A673 (cell line): ENCODE measurements at regions of chr4 and their contacts with region 1.

Region 1: GRCh38 chr4:47383829-47384427 is 79.6 kb downstream of the COMMD8 start:
- DNase-seq: peak; percentile 64
- H3K4me3 ChIP-seq: no peak overlapping the region
- H3K27ac ChIP-seq: no peak overlapping the region
- H3K4me1 ChIP-seq: no peaks in the 10 kb centered on the region
- H3K27me3 ChIP-seq: no peaks in the 10 kb centered on the region
- CTCF ChIP-seq: peak; percentile 67

Region 2: GRCh38 chr4:46844325-46844917 is 539.5 kb before region 1 on chr4:
- CTCF ChIA-PET with region 1: no interaction called
- POLR2A ChIA-PET with region 1: no interaction called
- intact Hi-C with region 1: loop called (anchors 2 kb)
- DNase-seq: peak; percentile 79
- H3K4me3 ChIP-seq: no peak overlapping the region
- H3K27ac ChIP-seq: no peak overlapping the region
- H3K4me1 ChIP-seq: no peaks in the 10 kb centered on the region
- H3K27me3 ChIP-seq: no peaks in the 10 kb centered on the region
- CTCF ChIP-seq: peak; percentile 81

Region 3: DNA sequence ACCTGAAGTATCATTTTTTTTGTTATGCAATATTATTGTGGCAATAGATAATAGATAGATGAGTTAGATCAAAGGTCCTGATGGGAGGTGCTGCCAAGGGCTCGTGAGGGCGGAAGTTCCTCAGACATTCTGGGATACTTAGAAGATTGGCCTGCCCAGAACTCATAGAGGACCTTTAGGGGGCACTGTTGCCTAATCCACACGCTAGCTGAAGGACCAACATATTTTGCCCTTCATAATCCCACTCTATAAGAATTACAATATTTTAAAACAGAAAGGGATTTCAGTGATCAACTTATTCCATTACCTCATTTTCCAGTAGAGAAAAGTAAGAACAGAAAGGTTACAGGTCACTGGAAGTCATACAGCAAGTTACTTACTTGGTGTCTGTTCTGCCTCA is 451.9 kb before region 1 on chr4:
- CTCF ChIA-PET with region 1: interaction called, 4 read pairs
- POLR2A ChIA-PET with region 1: no interaction called
- intact Hi-C with region 1: loop called (anchors 2 kb)
- DNase-seq: peak; percentile 67
- H3K4me3 ChIP-seq: no peak overlapping the region
- H3K27ac ChIP-seq: no peak overlapping the region
- H3K4me1 ChIP-seq: no peaks in the 10 kb centered on the region
- H3K27me3 ChIP-seq: peaks cover 28% of the 10 kb centered on the region
- CTCF ChIP-seq: peak; percentile 79

Region 4: DNA sequence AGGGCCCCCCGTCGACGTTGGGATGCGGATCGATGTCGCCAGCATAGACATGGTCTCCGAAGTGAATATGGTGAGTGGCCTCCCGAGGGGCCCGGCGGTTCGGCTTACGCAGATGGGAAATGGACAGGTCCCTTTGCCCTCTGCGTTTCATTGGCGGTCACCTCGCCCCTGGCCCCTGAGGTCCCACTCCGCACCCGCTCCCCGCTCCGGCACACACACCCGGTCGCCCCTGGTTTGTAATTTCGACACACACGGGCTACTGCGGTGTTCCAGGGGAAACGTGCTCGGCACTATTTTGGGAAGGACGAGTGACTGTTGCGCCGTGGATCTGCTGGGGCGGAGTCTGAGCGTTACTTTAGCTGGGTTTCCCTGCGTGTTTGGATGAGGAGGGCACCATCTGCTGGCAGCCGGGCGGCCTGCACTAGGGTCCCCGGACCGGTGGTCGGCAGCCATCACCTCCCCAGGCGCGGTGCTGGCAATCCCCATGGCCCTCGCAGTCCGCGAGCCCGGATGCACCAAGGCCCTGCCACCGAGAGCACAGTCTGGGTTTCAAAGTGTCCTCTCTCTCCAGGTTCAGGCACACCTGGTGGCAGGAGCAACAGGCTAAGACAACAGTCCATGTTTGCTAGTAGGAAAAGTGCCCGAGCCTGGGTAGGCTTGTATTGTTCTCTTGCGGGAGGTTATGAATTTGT is 351.4 kb before region 1 on chr4:
- CTCF ChIA-PET with region 1: no interaction called
- POLR2A ChIA-PET with region 1: no interaction called
- intact Hi-C with region 1: loop called (anchors 5 kb)
- DNase-seq: peak; percentile 87
- H3K4me3 ChIP-seq: peak overlapping the region; percentile 53
- H3K27ac ChIP-seq: no peak overlapping the region
- H3K4me1 ChIP-seq: no peaks in the 10 kb centered on the region
- H3K27me3 ChIP-seq: no peaks in the 10 kb centered on the region
- CTCF ChIP-seq: peak; percentile 95